ENCODE measurements at regions of chr6 and their contacts with region 1.

Region 1: GRCh38 chr6:39166189-39166911 is 51.4 kb upstream of the SAYSD1 start:
- DNase-seq: peak; percentile 37
- ATAC-seq: peak; percentile 91
- H3K4me3 ChIP-seq: no peak overlapping the region
- H3K27ac ChIP-seq: no peak overlapping the region
- H3K4me1 ChIP-seq: no peaks in the 10 kb centered on the region
- H3K27me3 ChIP-seq: no peaks in the 10 kb centered on the region; the same call in 1 of the 2 replicates
- CTCF ChIP-seq: peak; percentile 65
- POLR2A ChIP-seq: no peak
- RAD21 ChIP-seq: peak; percentile 69

Region 2: DNA sequence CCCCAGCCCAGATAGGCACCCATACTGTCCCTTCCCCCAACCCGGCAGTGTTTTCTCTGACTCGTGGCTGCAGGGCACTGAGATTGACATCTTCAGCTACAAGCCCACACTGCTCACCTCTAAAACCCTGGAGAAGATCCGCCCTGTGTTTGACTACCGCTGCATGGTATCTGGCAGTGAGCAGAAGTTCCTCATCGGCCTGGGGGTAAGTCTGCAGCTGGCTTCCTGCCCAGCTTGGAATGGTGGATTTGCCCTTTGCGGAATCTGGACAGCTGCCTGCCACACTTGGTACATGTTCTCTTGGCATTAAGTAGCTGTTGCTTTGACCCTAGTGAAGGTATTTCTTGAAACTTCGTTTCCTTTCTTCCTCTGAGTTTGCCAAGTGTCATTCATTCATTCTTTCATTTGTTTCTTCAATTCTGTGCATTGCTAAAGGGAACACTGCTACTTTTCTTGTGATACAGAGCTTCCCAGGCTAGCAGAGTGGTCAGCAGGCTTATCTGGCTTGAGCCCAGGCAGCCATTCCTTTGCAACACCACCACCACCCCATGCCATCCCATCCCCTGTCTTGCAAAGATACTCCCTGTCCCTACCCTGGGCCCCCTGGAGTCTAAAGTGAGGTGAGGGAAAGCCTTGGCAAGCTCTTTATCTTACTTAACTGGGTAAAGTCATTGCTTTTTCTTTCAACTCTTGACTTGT is 1692.8 kb before region 1 on chr6:
- CTCF ChIA-PET with region 1: no interaction called
- POLR2A ChIA-PET with region 1: no interaction called
- dilution Hi-C with region 1: no loop called
- in situ Hi-C with region 1: no loop called
- intact Hi-C with region 1: no loop called
- DNase-seq: peak; percentile 33
- ATAC-seq: peak; percentile 51
- H3K4me3 ChIP-seq: no peak overlapping the region
- H3K27ac ChIP-seq: no peak overlapping the region
- H3K4me1 ChIP-seq: no peaks in the 10 kb centered on the region
- H3K27me3 ChIP-seq: no peaks in the 10 kb centered on the region
- CTCF ChIP-seq: no peak
- POLR2A ChIP-seq: no peak
- RAD21 ChIP-seq: no peak

Region 3: GRCh38 chr6:38871741-38872568 is 294.4 kb before region 1 on chr6:
- CTCF ChIA-PET with region 1: no interaction called
- POLR2A ChIA-PET with region 1: no interaction called
- dilution Hi-C with region 1: no loop called
- in situ Hi-C with region 1: no loop called
- intact Hi-C with region 1: loop called (anchors 2 kb)
- DNase-seq: peak; percentile 36
- ATAC-seq: peak; percentile 92
- H3K4me3 ChIP-seq: no peak overlapping the region
- H3K27ac ChIP-seq: no peak overlapping the region
- H3K4me1 ChIP-seq: no peaks in the 10 kb centered on the region
- H3K27me3 ChIP-seq: 0 out of 2 replicates have a peak, but pooled peaks cover 1% of the 10 kb centered on the region
- CTCF ChIP-seq: peak; percentile 80
- POLR2A ChIP-seq: no peak
- RAD21 ChIP-seq: peak; percentile 79

Region 4: DNA sequence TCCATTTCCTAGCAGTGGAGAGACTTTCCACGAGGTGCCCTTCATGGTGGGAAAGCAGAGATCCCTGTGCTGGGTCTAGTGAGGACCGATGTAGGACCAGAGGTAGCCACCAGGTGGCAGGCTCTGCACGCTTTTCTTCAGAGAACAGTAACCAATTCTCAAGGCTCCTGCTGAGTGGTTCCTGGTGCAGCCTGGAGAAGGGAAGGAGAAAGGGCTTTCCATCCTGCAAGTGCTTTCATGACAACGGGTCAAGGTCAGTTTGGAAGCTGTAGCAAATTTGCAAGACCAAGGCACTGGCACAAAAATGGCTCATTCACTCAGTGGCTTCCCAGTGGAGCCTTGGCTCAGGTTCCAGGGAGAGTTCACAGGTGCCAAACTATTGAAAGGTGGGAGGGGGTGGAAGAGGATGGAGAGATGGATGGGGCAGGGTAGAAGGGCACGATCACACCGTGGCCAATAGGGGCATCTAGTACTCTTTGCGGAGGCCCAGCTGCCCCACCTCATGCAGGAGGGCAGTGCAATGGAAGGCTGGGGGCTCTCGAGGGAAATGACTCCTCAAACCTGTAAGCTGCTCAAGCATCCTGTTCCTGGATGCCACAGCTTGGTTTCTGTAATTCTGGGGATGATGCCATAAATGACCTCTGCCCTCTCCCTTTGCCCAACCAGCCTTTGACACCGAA is 181.7 kb after region 1 on chr6:
- CTCF ChIA-PET with region 1: no interaction called
- POLR2A ChIA-PET with region 1: no interaction called
- dilution Hi-C with region 1: no loop called
- in situ Hi-C with region 1: no loop called
- intact Hi-C with region 1: no loop called
- DNase-seq: peak; percentile 51
- ATAC-seq: peak; percentile 99
- H3K4me3 ChIP-seq: no peak overlapping the region
- H3K27ac ChIP-seq: no peak overlapping the region
- H3K4me1 ChIP-seq: no peaks in the 10 kb centered on the region
- H3K27me3 ChIP-seq: no peaks in the 10 kb centered on the region; the same call in 1 of the 2 replicates
- CTCF ChIP-seq: peak; percentile 82
- POLR2A ChIP-seq: no peak
- RAD21 ChIP-seq: peak; percentile 82